HepG2 (cell line): ENCODE measurements at regions of chr20 and their contacts with region 1.

Region 1: GRCh38 chr20:23147964-23148730 is 62.0 kb upstream of the CD93 start:
- DNase-seq: peak; percentile 90
- ATAC-seq: peak; percentile 80
- H3K4me3 ChIP-seq: peak overlapping the region in 2 of 3 experiments; percentile 2 to 53; a peak in 3 of 6 replicates
- H3K27ac ChIP-seq: peak overlapping the region; percentile 70
- H3K4me1 ChIP-seq: peaks cover 55% of the 10 kb centered on the region
- H3K27me3 ChIP-seq: no peaks in the 10 kb centered on the region; a peak in 1 of 5 replicates
- CTCF ChIP-seq: no peak
- EP300 ChIP-seq: peak in 1 of 2 experiments; percentile 78; a peak in 2 of 4 replicates
- POLR2A ChIP-seq: peak; percentile 44 to 53; a peak in 1 of 4 replicates
- RAD21 ChIP-seq: no peak

Region 2: DNA sequence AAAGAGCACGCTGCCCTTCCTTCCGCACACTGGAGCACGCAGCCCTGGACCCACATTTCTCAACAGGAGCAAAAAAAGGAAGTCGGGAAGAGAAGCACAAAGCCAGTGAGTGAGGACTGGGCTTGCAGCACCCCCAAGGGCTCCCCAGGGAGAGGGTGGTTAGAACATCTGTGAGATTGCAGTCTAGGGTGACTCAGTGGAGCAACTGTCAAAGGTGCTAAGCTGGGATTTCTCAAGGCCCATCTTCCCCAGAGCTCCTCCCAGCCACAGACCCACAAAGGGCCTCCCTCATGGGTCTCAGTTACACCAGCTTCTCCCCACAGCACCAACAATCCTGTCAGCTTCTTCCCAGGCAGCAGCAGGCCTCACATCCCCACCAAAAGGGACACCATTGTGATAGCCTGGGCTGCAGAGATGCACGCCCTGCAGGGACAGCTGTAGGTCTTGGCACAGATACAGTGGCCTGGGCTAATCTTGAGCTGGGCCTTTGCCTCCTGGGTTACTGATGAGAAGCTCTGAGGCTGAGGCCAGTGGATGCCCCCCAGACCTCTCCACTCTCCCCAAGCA is 22.4 kb before region 1 on chr20:
- CTCF ChIA-PET with region 1: no interaction called
- POLR2A ChIA-PET with region 1: no interaction called
- in situ Hi-C with region 1: no loop called
- intact Hi-C with region 1: no loop called
- DNase-seq: no peak
- ATAC-seq: no peak
- H3K4me3 ChIP-seq: no peak overlapping the region
- H3K27ac ChIP-seq: no peak overlapping the region
- H3K4me1 ChIP-seq: no peaks in the 10 kb centered on the region
- H3K27me3 ChIP-seq: peaks cover 2 to 5% of the 10 kb centered on the region in 2 experiments; a peak in 3 of 5 replicates
- CTCF ChIP-seq: no peak
- EP300 ChIP-seq: no peak
- POLR2A ChIP-seq: no peak
- RAD21 ChIP-seq: no peak

Region 3: DNA sequence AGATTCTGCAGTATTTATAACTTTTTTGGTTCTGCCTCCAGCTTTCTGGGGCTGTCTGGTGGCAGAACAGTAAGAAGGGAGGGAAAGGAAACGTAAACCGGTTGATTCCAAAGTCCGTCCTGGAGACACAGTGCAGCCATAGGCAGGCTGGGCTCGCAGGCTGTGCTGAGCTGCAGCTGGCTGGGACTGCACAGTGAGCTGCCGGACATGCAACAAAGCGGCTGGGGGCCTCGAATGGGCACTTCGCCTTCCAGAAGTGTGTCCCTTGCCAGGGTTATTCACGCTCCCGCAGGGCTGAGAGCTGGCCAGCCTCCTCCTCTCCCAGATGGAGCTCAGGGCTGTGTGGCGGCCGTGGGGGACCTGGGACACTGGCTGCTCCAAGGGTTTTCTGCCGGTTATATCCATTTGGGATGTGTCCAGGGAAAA is 16.0 kb after region 1 on chr20:
- CTCF ChIA-PET with region 1: no interaction called
- POLR2A ChIA-PET with region 1: interaction called, 5 read pairs
- in situ Hi-C with region 1: no loop called
- intact Hi-C with region 1: loop called (anchors 1 kb)
- DNase-seq: peak; percentile 43
- ATAC-seq: peak; percentile 90
- H3K4me3 ChIP-seq: peak overlapping the region in 1 of 3 experiments; percentile 41; a peak in 1 of 6 replicates
- H3K27ac ChIP-seq: no peak overlapping the region
- H3K4me1 ChIP-seq: peaks cover 18% of the 10 kb centered on the region
- H3K27me3 ChIP-seq: peaks cover 4 to 22% of the 10 kb centered on the region in 2 experiments; a peak in 3 of 5 replicates
- CTCF ChIP-seq: 0 out of 2 replicates have a peak, but pooled peaks have one; percentile 5
- EP300 ChIP-seq: no peak
- POLR2A ChIP-seq: no peak
- RAD21 ChIP-seq: no peak